GM12878 (cell line): ENCODE measurements at regions of chr2 and their contacts with region 1.

Region 1: GRCh38 chr2:187168720-187169713 is 279.0 kb downstream of the CALCRL start:
- DNase-seq: peak; percentile 7
- ATAC-seq: peak; percentile 86
- H3K4me3 ChIP-seq: no peak overlapping the region
- H3K27ac ChIP-seq: peak overlapping the region; percentile 53
- H3K4me1 ChIP-seq: peaks cover 27% of the 10 kb centered on the region
- H3K27me3 ChIP-seq: no peaks in the 10 kb centered on the region
- CTCF ChIP-seq: no peak
- EP300 ChIP-seq: peak; percentile 74 to 88; a peak in 3 of 4 replicates
- POLR2A ChIP-seq: no peak
- RAD21 ChIP-seq: no peak

Region 2: GRCh38 chr2:187155476-187155875 is 13.5 kb before region 1 on chr2:
- CTCF ChIA-PET with region 1: interaction called, 3 read pairs
- POLR2A ChIA-PET with region 1: interaction called, 3 read pairs
- RAD21 ChIA-PET with region 1: no interaction called
- SMC1A ChIA-PET with region 1: interaction called, 11 read pairs
- in situ Hi-C with region 1: no loop called
- intact Hi-C with region 1: no loop called
- DNase-seq: no peak
- ATAC-seq: no peak
- H3K4me3 ChIP-seq: no peak overlapping the region
- H3K27ac ChIP-seq: no peak overlapping the region
- H3K4me1 ChIP-seq: no peaks in the 10 kb centered on the region
- H3K27me3 ChIP-seq: no peaks in the 10 kb centered on the region
- CTCF ChIP-seq: no peak
- EP300 ChIP-seq: no peak
- POLR2A ChIP-seq: no peak
- RAD21 ChIP-seq: no peak